Activated naive CD4-positive, alpha-beta T cell treated with anti-CD3 and anti-CD28 coated beads for 36 hours (primary cell): ENCODE measurements at regions of chr16 and their contacts with region 1.

Region 1: GRCh38 chr16:68040507-68041288 is 17.6 kb downstream of the DUS2 start:
- DNase-seq: peak; percentile 95
- H3K4me3 Mint-ChIP-seq: no peak overlapping the region
- H3K27ac Mint-ChIP-seq: no peak overlapping the region
- H3K4me1 Mint-ChIP-seq: peaks cover 7% of the 10 kb centered on the region
- H3K27me3 Mint-ChIP-seq: no peaks in the 10 kb centered on the region

Region 2: DNA sequence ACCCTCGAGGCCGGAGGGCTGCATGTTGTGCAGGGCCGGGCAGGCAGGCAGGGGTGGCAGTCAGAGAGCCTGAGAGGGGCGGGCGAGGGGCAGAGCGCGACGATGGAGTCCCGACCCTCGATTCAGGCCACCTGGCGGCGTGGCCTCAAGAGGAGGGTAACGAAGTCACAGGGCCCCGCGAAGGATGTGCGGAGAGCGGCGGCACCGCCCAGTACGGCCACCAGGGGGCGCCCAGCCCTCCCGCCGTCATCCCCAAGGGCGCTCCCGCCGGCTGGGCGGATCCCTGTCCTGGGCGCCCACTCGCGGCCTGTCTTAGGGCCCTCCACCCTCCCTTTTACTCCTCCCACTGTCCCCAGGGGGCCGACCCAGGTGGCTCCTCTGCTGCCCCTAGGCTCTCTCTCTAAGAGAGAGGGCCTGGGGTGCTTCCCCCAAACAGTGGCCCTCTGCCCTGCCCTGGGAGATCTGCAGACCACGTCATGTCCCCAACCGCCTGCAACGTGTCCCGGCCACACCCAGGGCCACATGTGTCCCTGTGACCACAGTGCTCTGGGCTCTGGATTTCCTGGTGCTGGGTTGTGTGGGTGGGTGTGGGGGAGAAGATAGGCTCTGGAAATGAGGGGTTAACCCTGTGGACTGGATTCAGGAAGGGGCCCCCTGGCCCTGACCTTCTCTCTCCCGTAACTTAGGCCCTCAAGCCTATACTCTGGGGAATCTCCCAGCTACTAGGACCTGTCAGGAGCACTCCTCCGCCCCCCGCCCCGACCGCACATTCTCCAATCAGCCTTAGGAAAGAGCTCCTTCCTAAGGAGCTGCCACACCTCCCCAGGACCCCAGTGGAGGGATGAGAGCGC is 47.3 kb before region 1 on chr16:
- CTCF ChIA-PET with region 1: interaction called, 21 read pairs
- intact Hi-C with region 1: loop called (anchors 1 kb)
- DNase-seq: peak; percentile 83
- H3K4me3 Mint-ChIP-seq: peak overlapping the region; percentile 80
- H3K27ac Mint-ChIP-seq: peak overlapping the region; percentile 92
- H3K4me1 Mint-ChIP-seq: peaks cover 37% of the 10 kb centered on the region
- H3K27me3 Mint-ChIP-seq: no peaks in the 10 kb centered on the region

Region 3: GRCh38 chr16:68028996-68029395 is 11.7 kb before region 1 on chr16:
- CTCF ChIA-PET with region 1: interaction called, 16 read pairs
- intact Hi-C with region 1: no loop called
- DNase-seq: no peak
- H3K4me3 Mint-ChIP-seq: no peak overlapping the region
- H3K27ac Mint-ChIP-seq: no peak overlapping the region
- H3K4me1 Mint-ChIP-seq: peaks cover 16% of the 10 kb centered on the region
- H3K27me3 Mint-ChIP-seq: no peaks in the 10 kb centered on the region

Region 4: DNA sequence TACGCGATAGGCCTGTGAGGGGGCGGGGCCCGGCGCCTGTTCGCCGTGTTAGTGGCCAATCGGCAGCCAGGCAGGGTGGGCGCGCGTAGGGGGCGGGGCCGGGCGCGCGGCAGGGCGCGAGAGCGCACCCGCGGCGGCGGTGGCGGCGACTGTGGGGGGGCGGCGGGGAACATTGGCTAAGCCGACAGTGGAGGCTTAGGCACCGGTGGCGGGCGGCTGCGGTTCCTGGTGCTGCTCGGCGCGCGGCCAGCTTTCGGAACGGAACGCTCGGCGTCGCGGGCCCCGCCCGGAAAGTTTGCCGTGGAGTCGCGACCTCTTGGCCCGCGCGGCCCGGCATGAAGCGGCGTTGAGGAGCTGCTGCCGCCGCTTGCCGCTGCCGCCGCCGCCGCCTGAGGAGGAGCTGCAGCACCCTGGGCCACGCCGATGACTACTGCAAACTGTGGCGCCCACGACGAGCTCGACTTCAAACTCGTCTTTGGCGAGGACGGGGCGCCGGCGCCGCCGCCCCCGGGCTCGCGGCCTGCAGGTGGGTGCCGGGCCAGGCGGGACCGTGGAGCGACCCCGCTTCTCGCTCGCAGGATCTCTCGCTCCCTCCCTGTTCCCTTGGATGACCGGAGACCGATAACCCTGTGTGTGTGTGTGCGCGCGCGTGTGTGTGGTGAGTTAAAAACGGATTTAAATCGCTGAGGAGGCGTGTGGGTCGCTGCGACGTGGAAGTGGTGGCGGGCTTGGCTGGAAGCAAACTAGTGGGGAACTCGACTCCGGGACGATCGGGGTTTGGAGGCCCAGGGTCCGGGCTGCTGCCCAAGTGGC is 44.8 kb after region 1 on chr16 and contains the start of gene NFATC3:
- CTCF ChIA-PET with region 1: no interaction called
- intact Hi-C with region 1: no loop called
- DNase-seq: peak; percentile 99
- H3K4me3 Mint-ChIP-seq: peak within 1 kb of the TSS; percentile 81
- H3K27ac Mint-ChIP-seq: peak within 1 kb of the TSS; percentile 95
- H3K4me1 Mint-ChIP-seq: peaks cover 64% of the 10 kb centered on the region
- H3K27me3 Mint-ChIP-seq: no peaks in the 10 kb centered on the region
- total RNA-seq, gene NFATC3: 49.1 to 50.3 TPM

Region 5: DNA sequence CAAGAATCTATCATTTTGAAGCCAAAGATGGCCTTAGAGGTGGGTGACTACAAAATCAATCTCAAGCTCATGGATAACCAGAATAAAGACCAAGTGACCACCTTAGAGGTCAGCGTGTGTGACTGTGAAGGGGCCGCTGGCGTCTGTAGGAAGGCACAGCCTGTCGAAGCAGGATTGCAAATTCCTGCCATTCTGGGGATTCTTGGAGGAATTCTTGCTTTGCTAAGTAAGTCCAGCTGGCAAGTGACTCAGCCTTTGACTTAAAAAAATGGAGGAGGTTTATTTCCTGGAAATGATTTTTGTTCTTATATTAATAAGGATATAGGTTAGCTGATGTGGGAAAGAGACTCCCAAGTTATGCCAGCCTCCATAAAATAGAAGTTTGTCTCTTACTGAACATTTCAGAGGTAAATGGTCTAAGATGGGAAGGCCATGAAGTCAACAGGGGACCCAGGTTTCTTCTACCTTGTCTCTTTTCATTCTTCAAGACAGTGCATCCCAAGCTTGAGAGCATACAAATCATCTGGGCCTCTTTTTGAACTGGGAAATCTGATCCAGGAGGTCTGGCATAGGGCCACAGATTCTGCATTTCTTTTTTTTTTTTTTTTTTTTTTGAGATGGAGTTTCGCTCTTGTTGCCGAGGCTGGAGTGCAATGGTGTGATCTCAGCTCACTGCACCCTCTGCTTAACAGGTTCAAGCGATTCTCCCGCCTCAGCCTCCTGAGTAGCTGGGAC is 782.9 kb after region 1 on chr16:
- CTCF ChIA-PET with region 1: no interaction called
- intact Hi-C with region 1: no loop called
- DNase-seq: no peak
- H3K4me3 Mint-ChIP-seq: no peak overlapping the region
- H3K27ac Mint-ChIP-seq: no peak overlapping the region
- H3K4me1 Mint-ChIP-seq: no peaks in the 10 kb centered on the region
- H3K27me3 Mint-ChIP-seq: no peaks in the 10 kb centered on the region